ENCODE measurements at regions of chrX and their contacts with region 1.

Region 1: GRCh38 chrX:100768679-100769338 is 36.9 kb upstream of the SYTL4 start:
- DNase-seq: peak; percentile 60 to 95 (median 89)
- ATAC-seq: peak; percentile 63 to 100 (median 90)
- H3K4me3 ChIP-seq: no peak overlapping the region
- H3K27ac ChIP-seq: no peak overlapping the region
- H3K4me1 ChIP-seq: no peaks in the 10 kb centered on the region
- H3K27me3 ChIP-seq: peaks cover 0 to 5% (median 0%) of the 10 kb centered on the region in 4 donors
- CTCF ChIP-seq: peak; percentile 100

Region 2: GRCh38 chrX:100512471-100512870 is 256.3 kb before region 1 on chrX:
- intact Hi-C with region 1: loop called in 1 of 3 experiments (anchors 10 kb)
- DNase-seq: no peak
- ATAC-seq: peak in 3 of 4 donors; percentile 50 to 58 (median 56)
- H3K4me3 ChIP-seq: no peak overlapping the region
- H3K27ac ChIP-seq: no peak overlapping the region
- H3K4me1 ChIP-seq: no peaks in the 10 kb centered on the region
- H3K27me3 ChIP-seq: peaks cover 0 to 25% (median 4%) of the 10 kb centered on the region in 4 donors
- CTCF ChIP-seq: peak; percentile 48 to 74 (median 54)

Region 3: GRCh38 chrX:100685284-100685996 is 83.4 kb before region 1 on chrX:
- intact Hi-C with region 1: loop called in 2 of 3 experiments (anchors 5 kb)
- DNase-seq: peak in 4 of 6 donors; percentile 33 to 79 (median 56)
- ATAC-seq: peak; percentile 56 to 99 (median 95)
- H3K4me3 ChIP-seq: no peak overlapping the region
- H3K27ac ChIP-seq: no peak overlapping the region
- H3K4me1 ChIP-seq: no peaks in the 10 kb centered on the region
- H3K27me3 ChIP-seq: no peaks in the 10 kb centered on the region
- CTCF ChIP-seq: peak; percentile 64 to 84 (median 80)

Region 4: GRCh38 chrX:100850317-100850716 is 81.5 kb after region 1 on chrX:
- intact Hi-C with region 1: no loop called
- DNase-seq: no peak
- ATAC-seq: no peak
- H3K4me3 ChIP-seq: no peak overlapping the region
- H3K27ac ChIP-seq: no peak overlapping the region
- H3K4me1 ChIP-seq: no peaks in the 10 kb centered on the region
- H3K27me3 ChIP-seq: peaks cover 0 to 4% (median 2%) of the 10 kb centered on the region in 4 donors
- CTCF ChIP-seq: no peak

Region 5: DNA sequence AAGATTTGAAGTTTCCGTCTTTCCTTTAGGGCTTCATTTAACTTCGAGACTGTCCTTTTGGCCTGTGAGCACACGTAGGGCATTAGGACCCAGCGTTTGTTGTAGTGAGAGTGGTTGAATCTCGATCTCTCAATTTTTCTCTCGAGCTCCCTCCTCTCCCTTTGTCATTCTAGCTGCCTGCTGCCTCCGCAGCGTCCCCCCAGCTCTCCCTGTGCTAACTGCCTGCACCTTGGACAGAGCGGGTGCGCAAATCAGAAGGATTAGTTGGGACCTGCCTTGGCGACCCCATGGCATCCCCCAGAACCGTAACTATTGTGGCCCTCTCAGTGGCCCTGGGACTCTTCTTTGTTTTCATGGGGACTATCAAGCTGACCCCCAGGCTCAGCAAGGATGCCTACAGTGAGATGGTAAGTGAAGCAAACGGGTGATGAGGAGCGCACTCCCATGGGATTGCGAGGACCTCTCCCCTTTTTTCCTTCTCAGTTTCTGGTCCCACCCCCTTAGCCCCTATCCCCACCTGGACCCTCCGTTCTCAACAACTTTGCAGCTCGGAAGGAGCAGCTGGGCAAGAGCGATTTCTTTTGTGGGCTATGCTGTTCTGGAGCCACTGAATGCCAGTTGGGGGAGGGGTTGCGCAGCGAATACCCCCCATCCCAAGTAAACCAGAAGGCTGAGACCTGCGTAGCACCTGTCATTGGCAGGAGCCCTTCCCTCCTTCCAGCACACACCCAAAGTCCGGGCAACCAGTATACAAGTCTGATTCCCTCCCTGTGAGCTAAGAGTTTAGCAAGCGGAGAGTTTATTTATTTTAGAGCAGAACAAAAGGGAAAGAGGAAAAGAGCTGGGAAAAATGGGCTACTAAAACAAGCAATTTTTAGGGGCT is 310.1 kb after region 1 on chrX and contains the start of gene TMEM35A:
- intact Hi-C with region 1: no loop called
- DNase-seq: no peak
- ATAC-seq: peak in 2 of 4 donors; percentile 36 to 62
- H3K4me3 ChIP-seq: no peak within 1 kb of the TSS
- H3K27ac ChIP-seq: no peak within 1 kb of the TSS
- H3K4me1 ChIP-seq: no peaks in the 10 kb centered on the region
- H3K27me3 ChIP-seq: peaks cover 0 to 9% (median 0%) of the 10 kb centered on the region in 4 donors
- CTCF ChIP-seq: no peak
- total RNA-seq, gene TMEM35A: 0.08 to 0.25 (median 0.14) TPM in 5 of 6 donors, not detected in the other

Region 6: DNA sequence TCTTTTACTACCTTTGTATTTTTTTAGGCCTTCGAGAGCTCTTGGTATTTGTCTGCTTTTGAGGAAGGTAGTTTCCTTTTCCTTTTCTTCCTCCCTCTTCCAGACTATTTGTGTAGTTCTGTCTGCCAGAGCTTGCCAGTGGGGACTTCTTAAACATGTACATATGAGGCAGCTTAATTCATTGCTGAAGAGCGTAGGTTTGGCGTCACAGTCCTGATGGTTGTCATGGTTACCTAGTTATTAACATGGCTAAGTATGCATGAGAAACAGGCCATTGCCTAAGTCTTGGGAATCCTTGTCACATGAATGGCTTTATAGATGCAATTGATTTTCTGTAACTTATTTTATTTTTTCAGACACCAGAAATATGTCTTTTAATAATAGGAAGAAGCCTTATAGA is 939.4 kb after region 1 on chrX:
- intact Hi-C with region 1: no loop called
- DNase-seq: no peak
- ATAC-seq: no peak
- H3K4me3 ChIP-seq: no peak overlapping the region
- H3K27ac ChIP-seq: no peak overlapping the region
- H3K4me1 ChIP-seq: no peaks in the 10 kb centered on the region
- H3K27me3 ChIP-seq: no peaks in the 10 kb centered on the region
- CTCF ChIP-seq: no peak

Measured in pancreas (tissue), 10 donors.